Activated CD4-positive, alpha-beta T cell treated with anti-CD3 and anti-CD28 coated beads, Interleukin-2, amount 10 ng/mL, durations not matched to agents 24 days and 14 days (primary cell): ENCODE measurements at regions of chr16 and their contacts with region 1.

Region 1: GRCh38 chr16:46947900-46948547 is 25.4 kb downstream of the DNAJA2 start:
- DNase-seq: peak; percentile 82
- H3K4me3 Mint-ChIP-seq: no peak overlapping the region
- H3K27ac Mint-ChIP-seq: no peak overlapping the region
- H3K4me1 Mint-ChIP-seq: peaks cover 11% of the 10 kb centered on the region
- H3K27me3 Mint-ChIP-seq: no peaks in the 10 kb centered on the region

Region 2: DNA sequence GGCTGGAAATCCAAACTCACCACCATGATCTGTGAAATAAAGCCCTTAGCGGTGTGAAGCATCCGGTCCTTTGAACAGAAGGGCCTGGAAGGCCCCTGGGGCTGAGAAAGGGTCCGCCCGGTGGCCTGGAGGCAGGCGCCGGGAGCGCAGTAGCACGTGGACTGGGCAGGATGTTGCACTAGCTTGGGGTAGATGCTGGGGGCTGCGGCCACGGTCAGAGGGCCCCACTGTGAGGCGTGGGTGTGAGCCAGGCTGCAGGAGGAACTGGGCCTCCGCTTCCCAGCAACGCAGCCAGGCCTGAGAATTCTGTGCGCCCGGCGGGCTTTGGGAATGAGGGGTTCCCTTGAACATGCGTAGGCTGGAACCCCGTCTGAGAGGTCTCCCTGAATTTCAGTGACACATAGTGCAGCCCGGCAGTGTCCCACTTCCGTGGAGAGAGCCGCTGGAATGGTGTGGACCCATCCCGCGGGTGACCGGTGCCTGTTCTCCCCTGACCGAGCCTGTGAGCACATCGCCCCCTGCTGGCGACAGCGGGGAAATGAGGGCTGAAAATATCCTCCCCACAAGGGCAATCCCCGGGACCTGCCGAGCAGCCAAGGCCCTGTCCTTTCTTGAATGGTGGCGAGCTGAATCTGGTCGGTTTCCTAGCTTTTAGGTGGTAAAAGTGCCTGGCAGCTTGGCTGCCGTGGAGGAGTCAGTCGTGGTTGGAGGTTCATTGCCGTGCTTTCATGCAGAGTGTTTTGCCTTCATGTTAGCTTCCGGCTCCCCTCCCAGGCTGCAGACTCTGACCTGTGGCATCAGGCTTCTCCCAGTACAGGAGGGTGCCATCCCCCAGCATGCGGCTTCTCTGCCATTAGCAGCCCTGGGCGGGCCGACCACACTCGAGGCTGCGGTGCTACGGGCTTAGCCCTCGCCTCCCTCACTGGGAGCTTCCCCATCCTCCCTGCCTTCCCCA is 18.4 kb before region 1 on chr16:
- intact Hi-C with region 1: no loop called
- DNase-seq: peak; percentile 92
- H3K4me3 Mint-ChIP-seq: no peak overlapping the region
- H3K27ac Mint-ChIP-seq: peak overlapping the region; percentile 36
- H3K4me1 Mint-ChIP-seq: peaks cover 2% of the 10 kb centered on the region
- H3K27me3 Mint-ChIP-seq: no peaks in the 10 kb centered on the region

Region 3: GRCh38 chr16:47018223-47018891 is 70.3 kb after region 1 on chr16:
- intact Hi-C with region 1: loop called (anchors 5 kb)
- DNase-seq: peak; percentile 74
- H3K4me3 Mint-ChIP-seq: no peak overlapping the region
- H3K27ac Mint-ChIP-seq: peak overlapping the region; percentile 25
- H3K4me1 Mint-ChIP-seq: peaks cover 19% of the 10 kb centered on the region
- H3K27me3 Mint-ChIP-seq: peaks cover 2% of the 10 kb centered on the region

Region 4: DNA sequence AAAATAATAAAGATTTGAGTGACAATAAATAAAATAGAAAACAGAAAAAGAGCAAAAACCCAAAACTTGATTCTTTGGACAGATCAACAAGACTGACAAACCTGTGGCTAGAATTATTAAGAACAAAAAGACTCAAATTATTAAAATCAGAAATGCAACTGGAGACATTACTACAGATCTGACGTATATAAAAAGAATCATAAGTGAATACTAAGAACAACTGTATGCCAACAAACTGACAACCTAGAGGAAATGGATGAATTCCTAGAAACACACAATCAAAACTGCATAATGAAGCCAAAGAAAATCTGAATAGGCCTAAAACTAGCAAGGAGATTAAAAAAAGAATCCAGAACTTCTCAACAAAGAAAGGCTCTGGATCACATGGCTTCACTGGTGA is 148.3 kb after region 1 on chr16:
- intact Hi-C with region 1: no loop called
- DNase-seq: no peak
- H3K4me3 Mint-ChIP-seq: no peak overlapping the region
- H3K27ac Mint-ChIP-seq: no peak overlapping the region
- H3K4me1 Mint-ChIP-seq: peaks cover 4% of the 10 kb centered on the region
- H3K27me3 Mint-ChIP-seq: no peaks in the 10 kb centered on the region

Region 5: DNA sequence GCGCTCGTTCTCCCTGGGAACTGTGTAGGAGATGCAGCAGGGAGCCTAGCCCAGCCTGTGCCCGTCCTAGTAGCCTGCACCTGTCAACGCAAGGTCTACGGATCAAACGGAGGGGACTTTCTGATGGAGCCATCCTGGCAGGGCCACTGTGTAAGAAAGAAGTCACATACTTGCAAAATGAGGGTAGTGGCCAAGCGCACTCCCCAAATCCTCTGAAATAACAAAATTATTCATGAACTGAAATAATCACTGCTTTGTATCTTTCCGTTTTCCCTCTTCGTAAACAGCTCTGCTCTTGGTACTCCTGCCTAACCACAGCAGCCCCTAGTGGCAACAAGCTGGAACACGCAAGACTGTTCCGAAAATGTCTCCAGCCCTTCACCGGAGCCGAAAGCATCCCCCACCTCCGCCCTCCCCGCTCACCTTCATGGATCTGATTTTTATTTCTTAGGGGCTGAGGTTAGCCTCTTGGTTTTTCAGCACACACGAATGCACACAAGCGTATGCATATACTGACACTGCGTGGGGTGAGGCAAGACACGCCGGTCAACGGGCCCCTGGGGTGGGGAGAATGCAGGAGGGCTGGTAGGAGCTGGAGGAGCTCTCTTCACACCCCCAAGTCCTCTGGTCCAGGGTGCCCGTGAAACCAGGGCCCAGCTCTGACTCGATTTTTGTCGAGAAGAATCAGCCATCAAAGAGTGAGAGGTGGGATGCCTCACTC is 1107.0 kb after region 1 on chr16:
- intact Hi-C with region 1: loop called (anchors 10 kb)
- DNase-seq: peak; percentile 80
- H3K4me3 Mint-ChIP-seq: no peak overlapping the region
- H3K27ac Mint-ChIP-seq: no peak overlapping the region
- H3K4me1 Mint-ChIP-seq: no peaks in the 10 kb centered on the region
- H3K27me3 Mint-ChIP-seq: peaks cover 16% of the 10 kb centered on the region